ENCODE measurements at regions of chr4 and their contacts with region 1.

Region 1: DNA sequence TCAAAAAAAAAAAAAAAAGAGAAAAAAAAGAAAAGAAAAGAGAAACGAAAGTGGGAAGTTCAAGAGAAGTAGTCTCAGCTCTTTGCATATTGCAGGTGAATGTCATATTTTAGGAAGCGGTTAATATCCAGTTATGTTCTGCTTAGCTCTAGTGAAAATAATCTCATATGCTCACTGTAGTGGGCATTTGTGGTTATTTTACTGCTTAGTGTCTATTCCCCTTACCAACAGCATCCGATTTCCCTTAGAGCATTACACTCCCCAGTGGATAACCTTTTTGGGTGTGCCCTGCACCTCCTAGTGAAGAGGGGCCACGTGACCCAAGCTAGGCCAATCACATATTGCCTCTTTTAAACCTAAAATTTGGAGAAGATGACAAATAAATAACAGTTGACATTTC is 111.2 kb upstream of the ZNF827 start:
- DNase-seq: peak; percentile 86
- ATAC-seq: peak; percentile 95
- H3K4me3 ChIP-seq: peak overlapping the region in 1 of 5 experiments; percentile 24
- H3K4me3 Mint-ChIP-seq: peak overlapping the region; percentile 65
- H3K27ac ChIP-seq: no peak overlapping the region
- H3K27ac Mint-ChIP-seq: peak overlapping the region; percentile 76
- H3K4me1 ChIP-seq: peaks cover 43 to 44% of the 10 kb centered on the region in 2 donors
- H3K4me1 Mint-ChIP-seq: peaks cover 60% of the 10 kb centered on the region
- H3K27me3 ChIP-seq: no peaks in the 10 kb centered on the region
- H3K27me3 Mint-ChIP-seq: no peaks in the 10 kb centered on the region
- CTCF ChIP-seq: no peak

Region 2: GRCh38 chr4:145097821-145098674 is 951.8 kb before region 1 on chr4 and contains the starts of genes ABCE1 and ANAPC10:
- CTCF ChIA-PET with region 1: no interaction called
- POLR2A ChIA-PET with region 1: no interaction called
- intact Hi-C with region 1: loop called (anchors 10 kb)
- DNase-seq: peak; percentile 97
- ATAC-seq: peak; percentile 93
- H3K4me3 ChIP-seq: peak within 1 kb of the TSS; percentile 66 to 94 (median 79)
- H3K4me3 Mint-ChIP-seq: peak within 1 kb of the TSS; percentile 98
- H3K27ac ChIP-seq: peak within 1 kb of the TSS; percentile 89 to 90
- H3K27ac Mint-ChIP-seq: peak within 1 kb of the TSS; percentile 98
- H3K4me1 ChIP-seq: peaks cover 36 to 46% of the 10 kb centered on the region in 2 donors
- H3K4me1 Mint-ChIP-seq: peaks cover 42% of the 10 kb centered on the region
- H3K27me3 ChIP-seq: no peaks in the 10 kb centered on the region
- H3K27me3 Mint-ChIP-seq: no peaks in the 10 kb centered on the region
- CTCF ChIP-seq: no peak
- total RNA-seq, gene ABCE1: 46.2 and 51.0 TPM in 2 replicates
- total RNA-seq, gene ANAPC10: 18.9 and 19.4 TPM in 2 replicates

Region 3: GRCh38 chr4:145956288-145956890 is 93.4 kb before region 1 on chr4:
- CTCF ChIA-PET with region 1: no interaction called
- POLR2A ChIA-PET with region 1: no interaction called
- intact Hi-C with region 1: loop called (anchors 1 kb)
- DNase-seq: peak; percentile 78
- ATAC-seq: peak; percentile 61
- H3K4me3 ChIP-seq: no peak overlapping the region
- H3K4me3 Mint-ChIP-seq: no peak overlapping the region
- H3K27ac ChIP-seq: no peak overlapping the region
- H3K27ac Mint-ChIP-seq: no peak overlapping the region
- H3K4me1 ChIP-seq: peaks cover 5 to 6% of the 10 kb centered on the region in 2 donors
- H3K4me1 Mint-ChIP-seq: peaks cover 6% of the 10 kb centered on the region
- H3K27me3 ChIP-seq: no peaks in the 10 kb centered on the region
- H3K27me3 Mint-ChIP-seq: no peaks in the 10 kb centered on the region
- CTCF ChIP-seq: peak; percentile 86

Region 4: GRCh38 chr4:146029939-146030710 is 19.7 kb before region 1 on chr4:
- CTCF ChIA-PET with region 1: interaction called, 4 read pairs
- POLR2A ChIA-PET with region 1: interaction called, 4 read pairs
- intact Hi-C with region 1: loop called (anchors 2 kb)
- DNase-seq: peak; percentile 85
- ATAC-seq: peak; percentile 99
- H3K4me3 ChIP-seq: peak overlapping the region in 2 of 5 experiments; percentile 23 to 49
- H3K4me3 Mint-ChIP-seq: peak overlapping the region; percentile 69
- H3K27ac ChIP-seq: peak overlapping the region; percentile 30 to 65
- H3K27ac Mint-ChIP-seq: peak overlapping the region; percentile 72
- H3K4me1 ChIP-seq: peaks cover 43 to 45% of the 10 kb centered on the region in 2 donors
- H3K4me1 Mint-ChIP-seq: peaks cover 52% of the 10 kb centered on the region
- H3K27me3 ChIP-seq: no peaks in the 10 kb centered on the region
- H3K27me3 Mint-ChIP-seq: no peaks in the 10 kb centered on the region
- CTCF ChIP-seq: no peak

Region 5: DNA sequence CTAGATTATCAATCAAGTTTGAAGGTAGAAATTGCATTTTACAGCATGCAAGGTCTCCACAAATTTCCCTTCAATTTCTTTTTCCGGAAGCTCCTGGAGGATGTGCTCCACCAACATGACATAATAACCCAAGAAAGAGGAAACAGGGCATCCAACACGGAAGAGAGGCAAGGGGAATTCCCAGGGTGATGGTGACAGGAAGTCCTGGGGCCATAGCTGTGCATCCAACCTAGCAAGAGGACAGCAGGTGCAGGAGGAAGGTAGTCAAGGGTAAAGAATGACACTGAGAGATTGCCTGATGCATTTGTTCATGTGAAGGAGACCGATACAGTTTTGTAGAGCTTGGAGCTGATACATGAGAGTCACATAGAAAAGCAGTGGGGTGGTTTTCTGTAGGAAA is 10.1 kb after region 1 on chr4:
- CTCF ChIA-PET with region 1: interaction called, 26 read pairs
- POLR2A ChIA-PET with region 1: interaction called, 16 read pairs
- intact Hi-C with region 1: loop called (anchors 1 kb)
- DNase-seq: peak; percentile 95
- ATAC-seq: peak; percentile 89
- H3K4me3 ChIP-seq: peak overlapping the region in 3 of 5 experiments; percentile 21 to 44 (median 41)
- H3K4me3 Mint-ChIP-seq: no peak overlapping the region
- H3K27ac ChIP-seq: peak overlapping the region; percentile 82 to 85
- H3K27ac Mint-ChIP-seq: no peak overlapping the region
- H3K4me1 ChIP-seq: peaks cover 60 to 66% of the 10 kb centered on the region in 2 donors
- H3K4me1 Mint-ChIP-seq: peaks cover 40% of the 10 kb centered on the region
- H3K27me3 ChIP-seq: peaks cover 0 to 4% (median 0%) of the 10 kb centered on the region in 4 experiments
- H3K27me3 Mint-ChIP-seq: no peaks in the 10 kb centered on the region
- CTCF ChIP-seq: no peak